Mammary epithelial cell (primary cell): ENCODE measurements at regions of chr7 and their contacts with region 1.

Region 1: GRCh38 chr7:159070431-159071148 is 74.1 kb downstream of the VIPR2 start:
- DNase-seq: no peak
- H3K4me3 ChIP-seq: no peak overlapping the region
- H3K27ac ChIP-seq: no peak overlapping the region
- H3K4me1 ChIP-seq: no peaks in the 10 kb centered on the region
- H3K27me3 ChIP-seq: no peaks in the 10 kb centered on the region
- CTCF ChIP-seq: no peak

Region 2: GRCh38 chr7:159000859-159001435 is 69.6 kb before region 1 on chr7:
- CTCF ChIA-PET with region 1: no interaction called
- dilution Hi-C with region 1: no loop called
- in situ Hi-C with region 1: no loop called
- intact Hi-C with region 1: no loop called
- DNase-seq: no peak
- H3K4me3 ChIP-seq: no peak overlapping the region
- H3K27ac ChIP-seq: no peak overlapping the region
- H3K4me1 ChIP-seq: no peaks in the 10 kb centered on the region
- H3K27me3 ChIP-seq: no peaks in the 10 kb centered on the region
- CTCF ChIP-seq: no peak

Region 3: DNA sequence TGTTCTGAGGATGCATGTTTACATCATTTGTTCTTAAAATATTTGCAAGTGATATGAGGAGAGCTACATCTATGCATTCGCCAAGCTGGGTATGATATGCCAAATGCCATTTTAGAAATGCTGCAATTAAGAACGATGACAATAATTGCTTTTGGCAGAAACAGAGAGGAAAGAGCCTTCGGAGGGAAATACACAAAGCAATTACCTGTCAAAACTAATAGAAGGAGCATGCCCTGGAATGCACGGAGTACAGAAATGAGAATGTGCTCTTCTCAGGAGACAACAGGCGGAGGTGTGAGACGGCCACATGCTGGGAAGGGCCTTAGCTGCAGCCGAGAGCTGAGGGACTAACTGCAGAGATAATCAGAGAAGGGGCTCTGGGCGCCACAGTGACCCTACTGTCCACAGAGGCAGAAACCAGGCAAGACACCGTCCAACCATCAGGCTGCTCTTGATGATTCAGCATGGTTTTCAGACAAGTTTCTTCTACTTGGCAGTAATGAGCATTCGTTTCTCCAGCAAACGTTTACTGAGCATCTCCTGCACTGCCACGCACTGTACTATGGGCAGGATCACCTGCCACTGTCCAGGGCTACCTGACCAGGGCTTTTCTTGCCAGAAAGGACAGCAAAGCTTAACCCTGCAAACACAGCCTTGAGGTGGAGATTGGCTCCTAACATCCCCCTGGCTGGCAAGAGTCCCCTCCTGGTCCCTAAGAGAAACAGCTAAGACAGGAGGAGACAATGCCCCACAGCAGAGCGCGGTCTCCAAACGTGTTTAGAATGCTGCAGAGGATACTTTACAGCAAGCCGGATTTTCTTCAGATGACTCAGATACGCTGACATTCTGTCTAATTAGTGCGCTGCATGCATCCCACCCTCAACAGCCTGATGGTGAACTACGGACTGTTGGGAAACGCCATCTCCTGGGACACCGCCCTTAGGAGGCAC is 56.0 kb after region 1 on chr7:
- CTCF ChIA-PET with region 1: no interaction called
- dilution Hi-C with region 1: loop called (anchors 10 kb)
- in situ Hi-C with region 1: no loop called
- intact Hi-C with region 1: no loop called
- DNase-seq: no peak
- H3K4me3 ChIP-seq: no peak overlapping the region
- H3K27ac ChIP-seq: no peak overlapping the region
- H3K4me1 ChIP-seq: no peaks in the 10 kb centered on the region
- H3K27me3 ChIP-seq: no peaks in the 10 kb centered on the region
- CTCF ChIP-seq: no peak